HEK293 (cell line): ENCODE measurements at regions of chr4 and their contacts with region 1.

Region 1: DNA sequence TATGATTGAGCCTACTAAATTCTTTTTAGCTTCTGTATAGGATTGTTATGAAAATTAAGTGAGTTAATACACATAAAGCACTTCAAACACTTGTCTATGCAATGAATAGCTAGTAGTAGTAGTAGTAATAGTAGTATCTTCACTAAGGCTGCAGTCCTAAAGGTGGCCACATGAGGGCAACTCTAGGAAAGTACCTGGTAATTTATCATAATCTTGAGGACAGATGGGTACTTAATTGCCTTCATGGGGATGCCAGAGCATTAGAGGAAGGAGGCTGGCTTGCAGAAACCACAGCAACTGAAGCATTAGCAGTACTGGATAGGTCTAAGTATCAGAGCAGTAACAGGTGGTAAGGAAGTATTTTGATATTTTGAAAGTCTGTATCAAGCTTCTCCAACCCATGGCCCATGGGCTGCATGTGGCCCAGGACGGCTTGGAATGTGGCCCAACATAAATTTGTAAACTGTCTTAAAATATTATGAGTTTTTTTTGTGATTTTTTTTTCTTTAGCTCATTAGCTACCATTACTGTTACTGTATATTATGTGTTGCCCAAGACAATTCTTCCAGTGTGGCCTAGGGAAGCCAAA is 17.3 kb downstream of the NIPAL1 start:
- H3K4me3 ChIP-seq: no peak overlapping the region
- H3K27ac ChIP-seq: no peak overlapping the region
- H3K4me1 ChIP-seq: no peaks in the 10 kb centered on the region
- CTCF ChIP-seq: no peak

Region 2: GRCh38 chr4:47852136-47852535 is 181.8 kb before region 1 on chr4:
- CTCF ChIA-PET with region 1: no interaction called
- POLR2A ChIA-PET with region 1: no interaction called
- H3K4me3 ChIP-seq: no peak overlapping the region
- H3K27ac ChIP-seq: no peak overlapping the region
- H3K4me1 ChIP-seq: no peaks in the 10 kb centered on the region
- CTCF ChIP-seq: no peak

Region 3: DNA sequence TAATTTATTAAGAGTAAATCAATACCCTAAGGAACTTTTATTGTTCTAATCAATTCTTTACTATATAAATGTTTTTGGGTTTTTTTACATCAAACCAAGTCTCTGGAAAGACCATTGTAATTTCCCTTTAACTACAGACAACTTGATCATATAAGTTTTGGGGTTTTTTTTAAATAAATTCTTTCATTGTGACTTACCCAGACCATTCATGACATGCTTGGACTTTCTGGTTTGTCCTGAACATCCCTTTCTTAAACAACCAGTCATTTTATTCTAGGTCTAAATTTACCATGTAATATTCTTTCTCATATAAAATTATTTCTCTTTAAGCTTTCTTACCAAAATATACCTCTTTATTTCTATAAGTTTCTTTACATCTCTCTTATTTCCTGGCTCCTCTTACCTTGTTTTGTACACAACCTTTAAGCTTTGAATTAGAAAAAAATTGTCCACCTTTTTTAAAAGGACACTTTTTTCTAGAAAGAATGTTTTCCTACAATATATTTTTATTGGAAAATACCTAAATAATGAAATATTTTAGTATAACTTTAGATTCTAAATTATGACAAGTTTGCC is 25.8 kb before region 1 on chr4:
- CTCF ChIA-PET with region 1: no interaction called
- POLR2A ChIA-PET with region 1: no interaction called
- H3K4me3 ChIP-seq: no peak overlapping the region
- H3K27ac ChIP-seq: no peak overlapping the region
- H3K4me1 ChIP-seq: no peaks in the 10 kb centered on the region
- CTCF ChIP-seq: no peak

Region 4: DNA sequence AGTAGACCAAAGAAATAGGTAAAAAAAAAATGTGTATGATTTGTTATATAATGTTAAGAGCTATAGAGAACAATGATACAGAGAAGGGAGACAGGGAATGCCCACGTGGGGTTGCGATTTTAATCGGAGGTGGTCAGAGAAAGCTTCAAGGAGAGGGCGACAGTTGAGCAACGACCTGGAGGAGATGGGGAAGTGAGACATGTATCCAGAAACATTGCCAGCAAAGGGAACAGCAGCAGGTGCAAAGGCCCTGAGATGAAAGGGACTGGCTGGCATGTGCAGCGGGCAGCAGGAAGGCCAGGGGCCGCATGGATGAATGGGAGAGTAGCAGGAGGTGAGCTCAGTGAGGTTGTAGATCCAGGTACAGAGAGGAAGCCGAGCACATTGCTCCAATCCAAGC is 15.6 kb after region 1 on chr4:
- CTCF ChIA-PET with region 1: interaction called, 13 read pairs
- POLR2A ChIA-PET with region 1: interaction called, 3 read pairs
- H3K4me3 ChIP-seq: no peak overlapping the region
- H3K27ac ChIP-seq: no peak overlapping the region
- H3K4me1 ChIP-seq: no peaks in the 10 kb centered on the region
- CTCF ChIP-seq: no peak